Right ventricle myocardium superior (tissue), 1 donor: ENCODE measurements at regions of chr4 and their contacts with region 1.

Region 1: DNA sequence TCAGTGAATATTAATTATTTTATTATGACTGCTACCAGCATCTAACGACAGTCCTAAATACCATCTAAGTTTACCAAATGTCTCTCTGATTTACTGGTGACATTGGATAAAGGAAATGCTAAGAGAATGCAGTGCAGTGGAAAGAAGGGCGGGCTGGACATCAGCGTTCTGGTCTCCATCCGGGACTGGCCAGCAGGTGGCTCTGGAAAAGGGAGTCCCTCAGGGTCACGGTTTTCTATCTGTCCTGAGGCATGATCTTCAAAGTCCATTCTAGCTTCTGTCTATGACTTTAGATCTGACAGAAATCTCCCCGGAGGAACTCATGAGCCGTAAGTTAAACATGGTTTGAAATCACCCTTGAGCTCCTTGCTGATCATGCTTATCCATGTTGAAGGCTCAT is 3.3 kb downstream of the TRIM2 start:
- DNase-seq: peak; percentile 63
- ATAC-seq: peak; percentile 64

Region 2: GRCh38 chr4:153099391-153100140 is 108.0 kb before region 1 on chr4:
- intact Hi-C with region 1: no loop called
- DNase-seq: no peak
- ATAC-seq: no peak

Region 3: GRCh38 chr4:153318696-153319320 is 111.2 kb after region 1 on chr4:
- intact Hi-C with region 1: loop called (anchors 2 kb)
- DNase-seq: no peak
- ATAC-seq: peak; percentile 87

Region 4: GRCh38 chr4:153594210-153594609 is 386.6 kb after region 1 on chr4:
- intact Hi-C with region 1: loop called (anchors 10 kb)
- DNase-seq: no peak
- ATAC-seq: peak; percentile 84